Caco-2 (cell line): ENCODE measurements at regions of chr2 and their contacts with region 1.

Region 1: DNA sequence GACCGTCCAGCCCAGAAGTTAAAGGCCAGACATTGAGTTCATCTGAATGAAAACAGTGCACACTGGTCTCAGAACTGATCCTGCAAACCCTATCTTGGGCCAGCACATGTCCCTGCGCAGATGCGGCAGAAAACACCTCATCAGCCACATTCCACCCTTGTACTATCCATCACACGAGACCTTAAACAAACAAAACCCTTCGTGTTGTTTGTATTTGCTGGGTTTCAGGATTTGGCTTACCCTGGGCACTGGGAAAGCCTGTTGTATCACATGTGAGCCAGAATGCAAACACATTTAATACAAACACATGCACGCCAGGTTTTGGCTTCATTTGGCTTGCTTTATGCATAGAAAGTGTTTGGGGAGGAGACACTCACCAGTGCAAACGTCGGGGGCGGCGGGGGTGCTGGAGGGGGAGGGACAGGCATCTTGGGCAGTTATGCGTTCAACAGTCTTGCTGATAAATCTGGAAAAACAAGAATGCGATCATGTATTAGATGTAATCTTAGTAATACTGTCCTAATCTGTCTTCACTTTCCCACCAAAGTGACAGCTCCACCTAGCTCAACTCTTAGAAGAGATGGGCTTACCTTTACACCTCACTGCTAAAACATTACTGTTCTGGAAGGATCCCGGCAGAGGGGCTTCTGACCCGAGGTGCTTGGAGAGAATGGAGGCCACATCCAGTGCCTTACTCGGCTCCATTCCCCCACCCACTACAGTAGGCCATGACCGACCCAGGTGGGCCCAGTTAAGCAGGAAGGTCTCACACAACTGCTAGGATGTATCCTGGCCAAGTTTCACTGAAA is 12.3 kb downstream of the WIPF1 start:
- DNase-seq: peak in 1 of 2 experiments; percentile 13
- H3K4me3 ChIP-seq: no peak overlapping the region
- H3K4me3 Mint-ChIP-seq: no peak overlapping the region
- H3K27ac Mint-ChIP-seq: no peak overlapping the region
- H3K4me1 ChIP-seq: peaks cover 3% of the 10 kb centered on the region; the same call in 1 of the 2 replicates
- H3K4me1 Mint-ChIP-seq: no peaks in the 10 kb centered on the region
- H3K27me3 ChIP-seq: no peaks in the 10 kb centered on the region
- H3K27me3 Mint-ChIP-seq: no peaks in the 10 kb centered on the region
- CTCF ChIP-seq: no peak

Region 2: DNA sequence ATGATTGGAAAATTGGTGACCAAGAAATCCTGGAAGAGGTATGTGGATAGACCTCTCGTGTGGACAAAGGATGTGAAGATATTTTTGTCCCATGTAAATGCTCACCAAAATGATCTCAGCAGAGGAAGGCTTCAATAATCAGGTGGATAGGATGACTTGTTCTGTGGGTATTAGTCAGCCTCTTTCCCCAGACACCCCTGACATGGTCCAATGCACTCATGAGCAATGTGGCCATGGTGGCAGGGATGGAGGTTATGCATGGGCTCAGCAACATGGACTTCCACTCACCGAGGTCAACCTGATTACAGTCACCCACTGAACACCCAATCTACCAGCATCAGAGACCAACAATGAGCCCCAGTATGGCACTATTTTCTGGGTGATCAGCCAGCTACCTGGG is 158.8 kb after region 1 on chr2:
- CTCF ChIA-PET with region 1: no interaction called
- POLR2A ChIA-PET with region 1: no interaction called
- intact Hi-C with region 1: no loop called
- DNase-seq: no peak
- H3K4me3 ChIP-seq: no peak overlapping the region
- H3K4me3 Mint-ChIP-seq: no peak overlapping the region
- H3K27ac Mint-ChIP-seq: no peak overlapping the region
- H3K4me1 ChIP-seq: peaks cover 3% of the 10 kb centered on the region
- H3K4me1 Mint-ChIP-seq: no peaks in the 10 kb centered on the region
- H3K27me3 ChIP-seq: no peaks in the 10 kb centered on the region
- H3K27me3 Mint-ChIP-seq: no peaks in the 10 kb centered on the region
- CTCF ChIP-seq: no peak

Region 3: DNA sequence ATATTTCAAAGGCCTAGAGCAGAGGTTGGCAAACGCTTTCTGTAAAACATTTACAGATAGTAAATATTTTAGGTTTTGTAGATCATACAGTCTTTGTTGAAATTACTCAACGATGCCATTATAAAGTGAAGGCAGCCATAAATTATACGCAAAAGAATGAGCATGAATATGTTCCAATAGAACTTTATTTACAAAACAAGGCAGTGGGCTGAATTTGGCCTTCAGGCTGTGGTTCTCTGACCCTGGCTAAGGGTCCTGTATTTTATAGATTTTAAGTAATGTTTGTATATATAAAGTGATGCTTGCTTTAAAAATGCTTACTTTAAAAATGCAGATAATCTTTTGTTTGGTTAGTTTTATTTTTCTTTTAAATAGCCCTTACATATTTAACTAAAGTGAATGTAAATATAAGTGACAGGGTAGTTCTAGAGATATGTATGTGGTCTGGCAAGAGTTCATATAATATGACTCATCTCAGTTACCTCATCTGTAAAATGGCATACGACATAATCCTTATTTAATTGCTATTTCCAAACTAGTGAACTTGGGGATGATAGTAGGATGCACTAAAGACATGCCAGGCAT is 647.9 kb after region 1 on chr2:
- CTCF ChIA-PET with region 1: no interaction called
- POLR2A ChIA-PET with region 1: interaction called, 12 read pairs
- intact Hi-C with region 1: no loop called
- DNase-seq: no peak
- H3K4me3 ChIP-seq: no peak overlapping the region
- H3K4me3 Mint-ChIP-seq: no peak overlapping the region
- H3K27ac Mint-ChIP-seq: no peak overlapping the region
- H3K4me1 ChIP-seq: no peaks in the 10 kb centered on the region
- H3K4me1 Mint-ChIP-seq: no peaks in the 10 kb centered on the region
- H3K27me3 ChIP-seq: no peaks in the 10 kb centered on the region
- H3K27me3 Mint-ChIP-seq: no peaks in the 10 kb centered on the region
- CTCF ChIP-seq: no peak